ENCODE measurements at regions of chr12 and their contacts with region 1.

Region 1: GRCh38 chr12:90484094-90484493 is 470.9 kb downstream of the CCER1 start:
- DNase-seq: no peak
- ATAC-seq: no peak
- H3K4me3 Mint-ChIP-seq: no peak overlapping the region
- H3K27ac Mint-ChIP-seq: no peak overlapping the region
- H3K4me1 Mint-ChIP-seq: no peaks in the 10 kb centered on the region
- H3K27me3 Mint-ChIP-seq: no peaks in the 10 kb centered on the region
- CTCF ChIP-seq: no peak

Region 2: DNA sequence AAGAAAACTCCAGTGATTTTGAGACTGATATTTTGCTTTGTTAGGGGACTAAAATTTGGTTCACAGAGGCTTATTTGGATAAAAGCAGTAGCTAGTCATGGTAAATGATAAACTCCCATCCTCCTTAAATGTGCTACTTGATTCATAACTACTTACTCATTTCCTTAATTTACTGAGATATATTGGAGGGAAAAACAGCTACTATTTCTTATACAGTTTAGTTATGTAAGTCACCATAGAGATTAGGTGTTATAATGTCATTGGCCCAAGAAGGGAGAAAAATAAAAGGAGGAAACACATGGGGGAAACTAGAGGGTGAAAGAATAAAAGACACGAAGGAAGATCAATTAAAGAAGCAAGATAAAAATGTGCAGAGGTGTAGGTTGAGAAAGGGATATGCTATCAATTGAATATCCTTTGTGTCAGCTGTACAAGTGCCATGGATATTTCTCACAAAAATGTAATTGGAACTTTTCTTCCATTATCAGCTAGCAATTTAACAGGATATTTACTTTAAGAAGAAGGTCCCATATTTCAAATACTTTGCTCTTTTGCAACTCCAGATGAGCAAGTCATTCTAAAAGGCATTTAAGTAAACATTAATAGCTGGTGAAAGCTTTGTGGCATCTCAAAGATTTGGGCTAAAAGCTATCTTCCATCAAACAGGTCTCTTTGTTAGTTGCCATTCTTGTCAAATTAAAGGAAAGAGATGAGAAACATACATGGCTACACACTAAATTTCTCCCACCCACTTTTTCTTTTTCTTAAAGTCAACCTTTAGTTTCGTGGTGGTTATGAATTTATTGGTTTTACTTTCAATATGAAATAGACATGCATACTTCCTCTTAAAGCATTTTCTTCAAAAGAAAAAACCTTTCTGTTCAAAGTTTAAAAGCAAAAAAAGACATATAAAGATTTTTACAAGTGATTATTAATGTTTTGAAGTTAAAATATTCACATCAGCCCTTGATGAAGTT is 31.4 kb after region 1 on chr12:
- CTCF ChIA-PET with region 1: no interaction called
- POLR2A ChIA-PET with region 1: no interaction called
- intact Hi-C with region 1: no loop called
- DNase-seq: no peak
- ATAC-seq: no peak
- H3K4me3 Mint-ChIP-seq: no peak overlapping the region
- H3K27ac Mint-ChIP-seq: no peak overlapping the region
- H3K4me1 Mint-ChIP-seq: peaks cover 11% of the 10 kb centered on the region
- H3K27me3 Mint-ChIP-seq: peaks cover 2% of the 10 kb centered on the region
- CTCF ChIP-seq: no peak

Region 3: GRCh38 chr12:90677552-90677951 is 193.5 kb after region 1 on chr12:
- CTCF ChIA-PET with region 1: no interaction called
- POLR2A ChIA-PET with region 1: no interaction called
- intact Hi-C with region 1: loop called (anchors 5 kb)
- DNase-seq: no peak
- ATAC-seq: no peak
- H3K4me3 Mint-ChIP-seq: no peak overlapping the region
- H3K27ac Mint-ChIP-seq: no peak overlapping the region
- H3K4me1 Mint-ChIP-seq: no peaks in the 10 kb centered on the region
- H3K27me3 Mint-ChIP-seq: no peaks in the 10 kb centered on the region
- CTCF ChIP-seq: no peak

Measured in activated CD8-positive, alpha-beta T cell treated with anti-CD3 and anti-CD28 coated beads for 36 hours (primary cell).